Left cardiac atrium (tissue), 4 donors: ENCODE measurements at regions of chr2 and their contacts with region 1.

Region 1: GRCh38 chr2:72745679-72746368 is 80.0 kb downstream of the EXOC6B start:
- DNase-seq: no peak
- ATAC-seq: peak in 1 of 2 donors; percentile 48

Region 2: DNA sequence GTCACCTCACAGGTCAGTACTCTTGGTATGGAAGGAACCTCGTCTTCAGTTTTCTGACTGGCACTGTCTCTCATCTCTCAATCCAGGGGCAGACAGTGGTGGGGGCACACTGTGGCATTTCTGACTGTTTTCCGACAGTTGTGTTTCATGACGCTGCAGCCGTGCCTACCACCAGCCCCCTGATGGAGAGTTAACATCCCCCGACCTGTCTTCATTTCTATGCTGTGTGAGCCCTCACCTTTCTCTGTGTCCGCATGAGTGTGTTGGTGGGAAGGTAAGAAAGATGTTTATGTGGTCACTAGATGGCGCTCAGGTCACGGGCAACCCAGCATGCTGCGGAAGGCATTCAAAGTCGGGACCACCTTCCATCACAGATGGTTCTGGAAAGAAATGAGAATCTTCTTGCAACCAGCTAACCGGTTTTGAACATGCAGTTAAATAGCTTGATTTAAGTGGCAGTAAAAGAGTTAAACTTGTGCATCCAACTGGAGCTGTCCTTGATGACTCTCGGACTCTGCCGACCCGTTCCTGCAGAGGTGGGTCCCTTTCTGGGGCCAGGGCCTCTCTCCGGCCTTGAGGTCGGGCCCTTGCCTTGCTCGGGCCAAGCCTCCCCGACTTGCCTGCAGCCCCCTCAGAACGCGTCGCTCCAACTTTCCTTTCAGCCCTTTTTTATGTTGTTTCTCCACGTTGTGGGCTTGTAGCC is 1200.1 kb before region 1 on chr2:
- intact Hi-C with region 1: loop called in 1 of 2 experiments (anchors 5 kb)
- DNase-seq: peak; percentile 56
- ATAC-seq: peak; percentile 68 to 80

Region 3: DNA sequence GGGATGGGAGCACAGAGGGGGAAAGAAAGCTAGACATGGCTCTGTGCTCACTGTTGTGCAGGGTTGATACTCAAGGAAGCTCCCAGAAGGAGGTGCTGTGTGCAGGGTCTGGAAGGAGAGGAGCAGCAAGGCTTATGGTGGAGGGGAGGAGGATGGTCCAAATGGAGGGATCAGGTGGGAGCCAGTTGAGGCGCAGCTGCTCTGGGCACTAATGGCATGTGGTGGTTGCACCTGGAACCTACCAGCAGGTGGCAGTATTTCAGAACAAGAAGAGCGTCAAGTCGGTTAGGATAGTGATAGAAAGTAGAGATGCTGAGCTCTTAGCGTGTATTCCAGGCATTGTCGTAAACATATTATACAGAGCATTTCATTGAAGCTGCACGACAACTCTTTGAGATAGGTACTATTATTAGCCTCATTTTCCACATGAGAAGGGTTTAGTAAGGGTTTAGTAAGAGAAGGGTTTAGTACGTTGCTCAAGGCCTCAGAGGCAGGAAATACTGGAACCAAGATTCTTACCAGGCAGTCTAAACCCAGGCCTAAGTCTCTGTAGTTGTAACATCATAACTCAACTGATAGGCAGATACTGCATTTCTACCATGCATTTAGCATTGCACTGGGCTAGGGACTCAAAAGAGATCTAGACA is 821.8 kb before region 1 on chr2:
- intact Hi-C with region 1: loop called in 1 of 2 experiments (anchors 5 kb)
- DNase-seq: peak; percentile 65
- ATAC-seq: peak; percentile 87 to 88

Region 4: DNA sequence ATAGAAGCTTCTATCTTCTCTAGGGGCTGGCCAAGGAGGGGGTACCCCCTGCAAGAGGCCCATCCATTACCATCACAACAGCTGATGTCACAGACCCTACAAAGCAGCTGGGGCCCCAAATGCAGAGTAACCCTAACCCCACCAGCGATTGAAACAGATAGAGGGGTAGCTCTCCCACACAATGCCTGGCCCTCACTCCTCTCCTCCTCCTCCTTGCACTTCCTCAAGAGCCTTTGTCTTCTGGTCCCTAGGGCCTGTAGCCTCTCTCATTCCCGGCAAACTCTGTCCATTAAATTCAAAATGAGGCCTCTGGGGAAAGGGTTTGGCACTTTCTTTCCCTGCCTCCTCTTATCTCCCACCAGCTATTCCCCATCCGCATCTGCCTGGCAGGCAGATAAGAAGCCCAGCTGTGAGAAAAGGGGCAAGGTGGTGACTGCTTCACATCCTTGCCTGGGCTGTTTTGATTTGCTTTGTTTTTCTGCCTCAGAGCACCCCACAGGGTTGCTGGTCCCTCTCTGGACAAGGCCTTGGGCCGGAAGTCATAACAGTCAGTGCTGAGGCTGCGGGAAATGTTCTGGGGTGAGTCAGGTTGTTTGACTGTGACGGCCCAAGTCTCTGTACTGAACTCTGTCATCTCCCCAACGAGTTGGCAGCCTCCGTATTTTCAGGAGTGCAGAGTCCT is 572.0 kb before region 1 on chr2:
- intact Hi-C with region 1: loop called in 1 of 2 experiments (anchors 10 kb)
- DNase-seq: no peak
- ATAC-seq: peak in 1 of 2 donors; percentile 48